ENCODE measurements at regions of chr5 and their contacts with region 1.

Region 1: GRCh38 chr5:77775790-77776553 is at the start of gene TBCA:
- DNase-seq: peak; percentile 98
- H3K4me3 Mint-ChIP-seq: peak within 1 kb of the TSS; percentile 96
- H3K27ac Mint-ChIP-seq: peak within 1 kb of the TSS; percentile 98
- H3K4me1 Mint-ChIP-seq: peaks cover 41% of the 10 kb centered on the region
- H3K27me3 Mint-ChIP-seq: no peaks in the 10 kb centered on the region
- total RNA-seq, gene TBCA: 199 and 207 TPM in 2 replicates

Region 2: DNA sequence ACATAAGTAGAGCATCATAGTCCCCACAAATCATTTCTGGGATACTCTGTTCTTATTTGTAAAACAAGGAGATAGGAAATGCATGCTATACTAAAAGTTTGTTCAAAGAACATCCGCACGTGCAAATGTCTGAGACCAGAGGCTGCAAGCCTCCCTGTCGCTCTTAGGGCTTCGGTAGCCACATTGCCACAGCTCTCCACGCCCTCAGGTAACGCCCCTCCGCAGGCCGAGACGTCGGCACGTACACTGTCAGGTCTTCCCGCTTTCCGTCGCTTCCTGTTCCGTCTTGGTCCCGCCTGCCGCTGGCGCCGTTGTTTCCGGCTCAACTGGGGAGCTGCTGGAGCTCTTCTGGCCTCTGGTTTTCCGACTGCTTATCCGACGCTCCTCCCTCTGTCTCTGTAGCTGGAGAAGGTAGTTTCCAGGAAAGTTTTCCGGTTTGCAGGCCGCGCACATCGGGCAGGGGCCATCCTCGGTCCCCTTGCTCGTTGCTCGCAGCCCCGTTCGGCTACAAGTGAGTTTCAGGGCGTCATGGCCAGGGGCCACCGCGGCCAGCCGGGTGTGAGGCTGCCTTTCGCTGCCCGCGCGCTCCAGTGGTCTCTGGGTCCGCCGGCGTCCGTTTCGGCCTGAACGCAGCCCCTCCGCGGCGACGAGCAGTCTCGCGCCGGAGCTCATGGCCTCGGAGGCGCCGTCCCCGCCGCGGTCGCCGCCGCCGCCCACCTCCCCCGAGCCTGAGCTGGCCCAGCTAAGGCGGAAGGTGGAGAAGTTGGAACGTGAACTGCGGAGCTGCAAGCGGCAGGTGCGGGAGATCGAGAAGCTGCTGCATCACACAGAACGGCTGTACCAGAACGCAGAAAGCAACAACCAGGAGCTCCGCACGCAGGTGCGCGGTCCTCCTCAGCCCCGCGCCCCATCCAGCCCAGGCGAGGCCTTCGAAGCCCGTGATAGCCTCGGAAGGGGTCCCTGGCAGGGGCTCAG is 745.6 kb before region 1 on chr5 and contains the start of gene AGGF1:
- intact Hi-C with region 1: loop called (anchors 2 kb)
- DNase-seq: peak; percentile 97
- H3K4me3 Mint-ChIP-seq: peak within 1 kb of the TSS; percentile 99
- H3K27ac Mint-ChIP-seq: peak within 1 kb of the TSS; percentile 95
- H3K4me1 Mint-ChIP-seq: peaks cover 23% of the 10 kb centered on the region
- H3K27me3 Mint-ChIP-seq: peaks cover 8% of the 10 kb centered on the region
- total RNA-seq, gene AGGF1: 29.1 and 32.9 TPM in 2 replicates

Region 3: GRCh38 chr5:77751668-77752023 is 24.3 kb before region 1 on chr5:
- intact Hi-C with region 1: loop called (anchors 2 kb)
- DNase-seq: no peak
- H3K4me3 Mint-ChIP-seq: no peak overlapping the region
- H3K27ac Mint-ChIP-seq: no peak overlapping the region
- H3K4me1 Mint-ChIP-seq: peaks cover 20% of the 10 kb centered on the region
- H3K27me3 Mint-ChIP-seq: no peaks in the 10 kb centered on the region

Region 4: GRCh38 chr5:77924081-77924480 is 148.1 kb after region 1 on chr5:
- intact Hi-C with region 1: no loop called
- DNase-seq: no peak
- H3K4me3 Mint-ChIP-seq: no peak overlapping the region
- H3K27ac Mint-ChIP-seq: no peak overlapping the region
- H3K4me1 Mint-ChIP-seq: peaks cover 2% of the 10 kb centered on the region
- H3K27me3 Mint-ChIP-seq: peaks cover 8% of the 10 kb centered on the region

Region 5: DNA sequence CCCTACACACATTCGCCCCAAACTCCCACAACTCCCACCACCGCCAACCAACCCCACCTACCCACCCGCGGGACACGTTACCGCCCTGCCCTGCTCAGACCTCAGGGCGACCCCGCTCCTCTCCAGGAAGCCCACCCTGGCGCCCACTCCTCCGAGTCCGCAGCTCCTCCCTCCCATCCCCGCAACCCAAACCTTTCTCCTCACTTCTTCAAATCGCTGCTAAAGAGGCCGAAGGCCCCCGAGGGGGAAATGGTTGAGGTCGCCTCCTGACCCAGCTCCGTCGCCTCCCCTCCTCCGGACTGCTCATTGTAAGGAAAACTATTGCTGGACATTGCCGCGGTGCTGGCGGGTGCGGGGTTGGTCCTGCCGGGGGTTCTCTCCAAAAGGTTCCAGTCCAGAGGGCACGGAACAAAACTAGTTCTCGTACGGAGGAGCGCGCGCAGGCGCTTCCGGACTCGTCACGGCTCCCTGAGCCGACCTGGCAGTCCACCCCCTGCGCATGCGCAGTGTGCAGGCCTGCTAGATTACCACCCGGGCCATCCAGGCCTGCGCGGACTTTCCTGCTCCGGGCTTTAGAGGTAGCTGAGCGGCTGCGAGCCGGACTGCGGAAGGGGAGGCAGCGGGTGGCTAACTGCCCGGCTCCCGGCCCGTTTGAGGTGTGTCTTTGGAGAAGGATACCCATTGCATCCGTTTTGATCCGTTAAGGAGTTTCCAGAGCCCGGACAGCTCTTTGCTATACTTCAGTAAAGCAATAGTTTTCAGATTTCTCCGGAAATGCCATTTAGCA is 518.5 kb after region 1 on chr5 and contains the start of gene AP3B1:
- intact Hi-C with region 1: loop called (anchors 1 kb)
- DNase-seq: peak; percentile 99
- H3K4me3 Mint-ChIP-seq: peak within 1 kb of the TSS; percentile 88
- H3K27ac Mint-ChIP-seq: peak within 1 kb of the TSS; percentile 97
- H3K4me1 Mint-ChIP-seq: peaks cover 26% of the 10 kb centered on the region
- H3K27me3 Mint-ChIP-seq: peaks cover 10% of the 10 kb centered on the region
- total RNA-seq, gene AP3B1: 40.1 and 45.5 TPM in 2 replicates

Region 6: DNA sequence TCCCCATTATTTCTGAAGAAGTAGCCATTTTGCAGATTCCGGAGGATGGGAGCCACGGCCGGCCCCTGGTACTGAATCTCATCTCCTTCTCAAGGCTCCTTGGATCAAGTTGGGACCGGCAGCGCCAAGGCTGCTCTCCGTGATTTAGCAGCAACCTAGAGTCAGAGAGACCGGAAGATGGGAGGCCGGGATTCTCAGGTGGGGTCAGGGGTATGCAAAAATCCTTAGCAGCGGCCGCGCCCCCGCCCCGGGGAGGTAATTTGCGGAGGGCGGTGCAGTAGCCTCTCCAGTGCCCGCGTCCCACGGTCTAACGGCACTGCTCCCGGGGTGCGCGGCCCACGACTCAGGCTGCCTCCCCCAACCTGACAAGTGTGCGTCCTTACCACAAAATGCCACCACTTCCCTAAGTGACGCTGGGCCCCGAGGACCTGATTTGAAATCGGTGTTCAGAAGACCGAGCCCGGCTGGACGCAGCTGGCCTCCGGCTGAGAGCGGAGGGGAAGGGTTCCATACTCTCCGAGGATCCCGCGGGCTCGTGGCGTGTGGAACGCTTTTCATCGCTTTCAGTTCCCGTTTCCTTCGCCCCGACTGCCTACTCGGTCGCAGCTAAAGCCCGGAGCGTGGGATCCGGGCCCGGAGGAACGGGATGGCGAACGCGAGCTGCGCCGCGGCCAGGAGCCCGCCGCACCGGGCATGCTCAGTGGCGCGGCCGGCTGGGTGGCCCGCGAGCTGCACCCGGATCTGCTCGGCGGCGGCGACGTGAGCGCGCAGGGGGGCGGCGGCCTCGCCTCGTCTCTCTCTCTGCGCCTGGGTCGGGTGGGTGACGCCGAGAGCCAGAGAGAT is 584.1 kb after region 1 on chr5 and contains the start of gene SCAMP1:
- intact Hi-C with region 1: loop called (anchors 5 kb)
- DNase-seq: peak; percentile 98
- H3K4me3 Mint-ChIP-seq: peak within 1 kb of the TSS; percentile 97
- H3K27ac Mint-ChIP-seq: peak within 1 kb of the TSS; percentile 98
- H3K4me1 Mint-ChIP-seq: peaks cover 28% of the 10 kb centered on the region
- H3K27me3 Mint-ChIP-seq: no peaks in the 10 kb centered on the region
- total RNA-seq, gene SCAMP1: 20.8 and 23.1 TPM in 2 replicates

Measured in activated CD4-positive, alpha-beta T cell treated with anti-CD3 and anti-CD28 coated beads, Interleukin-2, amount 10 ng/mL, durations not matched to agents 24 days and 14 days (primary cell).